Sciatic nerve (tissue), 2 donors: ENCODE measurements at regions of chr16 and their contacts with region 1.

Region 1: DNA sequence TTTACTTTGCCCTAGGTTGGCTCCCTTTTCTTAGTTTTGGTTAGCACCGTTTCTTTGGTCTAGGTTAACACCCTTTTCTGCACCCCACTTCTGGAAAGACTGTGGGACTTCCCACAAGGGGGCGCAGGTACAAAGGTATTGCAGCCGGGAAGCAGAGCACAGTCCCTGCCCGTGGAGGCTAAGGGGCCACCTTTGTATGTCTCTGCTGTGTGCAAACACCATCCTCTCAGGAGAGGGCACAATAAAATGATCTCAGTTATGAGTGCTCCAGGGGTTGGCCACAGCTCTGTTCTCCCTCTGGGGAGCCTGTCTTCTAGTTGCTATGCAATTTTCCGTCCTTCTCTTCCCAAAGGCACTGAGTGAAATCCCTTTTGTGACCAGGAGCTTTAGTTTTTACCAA is 28.4 kb upstream of the TMC5 start:
- DNase-seq: peak; percentile 64
- ATAC-seq: no peak

Region 2: GRCh38 chr16:19223235-19224170 is 165.7 kb before region 1 on chr16:
- intact Hi-C with region 1: no loop called
- DNase-seq: no peak
- ATAC-seq: no peak

Region 3: GRCh38 chr16:19502395-19503131 is 113.3 kb after region 1 on chr16:
- intact Hi-C with region 1: loop called (anchors 2 kb)
- DNase-seq: peak; percentile 85
- ATAC-seq: peak; percentile 72